Psoas muscle (tissue), 8 donors: ENCODE measurements at regions of chr20 and their contacts with region 1.

Region 1: GRCh38 chr20:47600967-47601547 is 99.4 kb downstream of the NCOA3 start:
- DNase-seq: no peak
- ATAC-seq: no peak
- H3K4me3 ChIP-seq: no peak overlapping the region
- H3K27ac ChIP-seq: no peak overlapping the region
- H3K4me1 ChIP-seq: peaks cover 20% of the 10 kb centered on the region
- H3K27me3 ChIP-seq: no peaks in the 10 kb centered on the region
- CTCF ChIP-seq: no peak

Region 2: GRCh38 chr20:47400685-47401084 is 200.4 kb before region 1 on chr20:
- intact Hi-C with region 1: loop called in 1 of 2 experiments (anchors 10 kb)
- DNase-seq: no peak
- ATAC-seq: no peak
- H3K4me3 ChIP-seq: no peak overlapping the region
- H3K27ac ChIP-seq: no peak overlapping the region
- H3K4me1 ChIP-seq: peaks cover 15% of the 10 kb centered on the region
- H3K27me3 ChIP-seq: no peaks in the 10 kb centered on the region
- CTCF ChIP-seq: no peak

Region 3: GRCh38 chr20:47586646-47587306 is 14.3 kb before region 1 on chr20:
- intact Hi-C with region 1: loop called in 1 of 2 experiments (anchors 1 kb)
- DNase-seq: no peak
- ATAC-seq: peak in 2 of 4 donors; percentile 32 to 55
- H3K4me3 ChIP-seq: no peak overlapping the region
- H3K27ac ChIP-seq: no peak overlapping the region
- H3K4me1 ChIP-seq: peaks cover 19% of the 10 kb centered on the region
- H3K27me3 ChIP-seq: no peaks in the 10 kb centered on the region
- CTCF ChIP-seq: no peak